Panc1 (cell line): ENCODE measurements at regions of chr20 and their contacts with region 1.

Region 1: GRCh38 chr20:37161830-37162549 is 17.1 kb upstream of the RPN2 start:
- DNase-seq: no peak
- ATAC-seq: no peak
- H3K4me3 ChIP-seq: no peak overlapping the region
- H3K27ac ChIP-seq: no peak overlapping the region
- H3K4me1 ChIP-seq: no peaks in the 10 kb centered on the region
- H3K27me3 ChIP-seq: peaks cover 6% of the 10 kb centered on the region; the same call in 1 of the 2 replicates
- CTCF ChIP-seq: no peak

Region 2: DNA sequence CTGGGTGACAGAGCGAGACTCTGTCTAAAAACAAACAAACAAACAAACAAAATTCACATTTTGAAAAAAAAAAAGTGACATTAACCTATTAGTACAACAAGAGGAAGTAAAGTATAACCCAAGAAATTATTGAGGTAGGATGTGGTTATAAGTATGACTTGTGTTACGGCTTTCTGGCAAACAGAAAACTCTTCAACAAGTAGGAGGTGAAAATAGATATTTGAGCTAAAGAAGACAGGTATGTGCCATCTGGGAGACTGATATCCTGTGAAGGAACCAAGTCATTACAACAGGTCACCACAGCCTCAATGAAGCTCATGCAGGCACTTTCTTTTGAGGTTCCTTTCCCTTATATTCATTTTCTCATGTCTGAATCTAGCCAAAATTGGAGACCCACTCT is 257.3 kb before region 1 on chr20:
- CTCF ChIA-PET with region 1: no interaction called
- POLR2A ChIA-PET with region 1: interaction called, 10 read pairs
- in situ Hi-C with region 1: no loop called
- intact Hi-C with region 1: no loop called
- DNase-seq: no peak
- ATAC-seq: no peak
- H3K4me3 ChIP-seq: no peak overlapping the region
- H3K27ac ChIP-seq: no peak overlapping the region
- H3K4me1 ChIP-seq: no peaks in the 10 kb centered on the region
- H3K27me3 ChIP-seq: no peaks in the 10 kb centered on the region
- CTCF ChIP-seq: no peak

Region 3: GRCh38 chr20:37151529-37151928 is 10.5 kb before region 1 on chr20:
- CTCF ChIA-PET with region 1: interaction called, 14 read pairs
- POLR2A ChIA-PET with region 1: no interaction called
- in situ Hi-C with region 1: no loop called
- intact Hi-C with region 1: no loop called
- DNase-seq: no peak
- ATAC-seq: no peak
- H3K4me3 ChIP-seq: no peak overlapping the region
- H3K27ac ChIP-seq: no peak overlapping the region
- H3K4me1 ChIP-seq: no peaks in the 10 kb centered on the region
- H3K27me3 ChIP-seq: no peaks in the 10 kb centered on the region
- CTCF ChIP-seq: no peak

Region 4: GRCh38 chr20:37209661-37210314 is 47.8 kb after region 1 on chr20:
- CTCF ChIA-PET with region 1: no interaction called
- POLR2A ChIA-PET with region 1: no interaction called
- in situ Hi-C with region 1: no loop called
- intact Hi-C with region 1: no loop called
- DNase-seq: no peak
- ATAC-seq: no peak
- H3K4me3 ChIP-seq: no peak overlapping the region
- H3K27ac ChIP-seq: no peak overlapping the region
- H3K4me1 ChIP-seq: no peaks in the 10 kb centered on the region
- H3K27me3 ChIP-seq: no peaks in the 10 kb centered on the region
- CTCF ChIP-seq: no peak

Region 5: DNA sequence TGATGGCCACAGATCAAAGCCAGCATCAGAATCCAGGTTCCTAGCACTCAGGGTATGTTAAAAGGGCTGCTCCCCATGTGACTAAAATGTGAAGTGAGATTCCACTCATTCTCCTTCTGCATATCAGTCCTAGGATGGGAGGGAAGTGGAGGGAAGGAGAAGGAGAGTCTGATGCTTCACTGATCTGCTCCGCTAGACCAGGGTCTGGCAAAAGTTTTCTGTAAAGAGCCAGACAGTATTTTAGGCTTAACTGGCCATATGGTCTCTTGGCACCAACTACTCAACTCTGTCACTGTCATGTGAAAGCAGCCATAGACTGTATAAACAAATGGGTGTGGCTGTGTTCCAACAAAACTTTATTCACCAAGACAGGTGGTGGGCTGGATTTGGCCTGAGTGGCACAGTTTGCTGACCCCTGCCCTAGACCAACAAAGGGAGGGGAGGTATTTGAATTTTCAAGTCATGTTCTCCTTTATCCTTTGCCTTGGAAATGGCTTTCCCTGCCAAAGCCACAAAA is 77.0 kb after region 1 on chr20:
- CTCF ChIA-PET with region 1: no interaction called
- POLR2A ChIA-PET with region 1: no interaction called
- in situ Hi-C with region 1: no loop called
- intact Hi-C with region 1: no loop called
- DNase-seq: no peak
- ATAC-seq: no peak
- H3K4me3 ChIP-seq: no peak overlapping the region
- H3K27ac ChIP-seq: no peak overlapping the region
- H3K4me1 ChIP-seq: no peaks in the 10 kb centered on the region
- H3K27me3 ChIP-seq: no peaks in the 10 kb centered on the region
- CTCF ChIP-seq: no peak